A549 (cell line): ENCODE measurements at regions of chr1 and their contacts with region 1.

Region 1: DNA sequence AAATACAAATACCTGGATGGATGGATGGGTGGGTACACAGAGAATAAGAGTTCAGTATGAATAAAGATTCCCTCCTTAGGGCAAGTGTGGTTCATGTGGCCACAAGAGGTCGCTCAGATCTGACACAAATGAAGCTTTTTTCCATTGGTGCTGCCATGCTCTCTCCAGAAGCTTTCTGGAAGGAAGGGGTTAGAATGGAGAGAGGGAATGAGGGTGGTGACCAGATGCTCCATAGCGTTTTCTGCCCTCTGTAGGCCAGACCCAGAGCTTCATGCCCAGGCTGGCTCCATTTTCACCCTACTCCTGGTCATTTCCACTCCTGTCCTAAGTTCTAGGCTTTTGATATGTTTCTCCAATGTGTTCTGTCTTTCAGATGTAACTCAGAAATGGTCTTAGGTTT is 3.3 kb upstream of the FCRL6 start:
- DNase-seq: peak; percentile 86 to 91
- ATAC-seq: peak; percentile 91 to 99
- H3K4me3 ChIP-seq: no peak overlapping the region
- H3K27ac ChIP-seq: no peak overlapping the region
- H3K4me1 ChIP-seq: no peaks in the 10 kb centered on the region
- CTCF ChIP-seq: peak; percentile 88
- EP300 ChIP-seq: no peak
- POLR2A ChIP-seq: no peak
- RAD21 ChIP-seq: peak; percentile 87

Region 2: DNA sequence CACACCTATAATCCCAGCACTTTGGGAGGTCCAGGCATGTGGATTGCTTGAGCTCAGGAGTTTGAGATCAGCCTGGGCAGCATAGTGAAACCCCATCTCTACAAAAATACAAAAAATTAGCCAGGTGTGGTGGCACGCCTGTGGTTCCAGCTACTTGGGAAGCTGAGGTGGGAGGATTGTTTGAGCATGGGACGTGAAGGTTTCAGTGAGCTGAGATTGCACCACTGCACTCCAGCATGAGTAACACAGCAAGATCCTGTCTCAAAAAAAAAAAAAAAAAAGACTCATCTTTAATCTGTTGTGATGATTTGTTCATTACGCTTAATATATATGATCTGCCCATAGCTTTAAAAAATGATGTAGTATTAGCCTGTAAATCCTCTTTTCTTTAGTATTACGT is 315.4 kb before region 1 on chr1:
- CTCF ChIA-PET with region 1: no interaction called
- POLR2A ChIA-PET with region 1: no interaction called
- DNase-seq: no peak
- ATAC-seq: no peak
- H3K4me3 ChIP-seq: no peak overlapping the region
- H3K27ac ChIP-seq: no peak overlapping the region
- H3K4me1 ChIP-seq: no peaks in the 10 kb centered on the region
- CTCF ChIP-seq: no peak
- EP300 ChIP-seq: no peak
- POLR2A ChIP-seq: no peak
- RAD21 ChIP-seq: no peak

Region 3: GRCh38 chr1:159780583-159781582 is 18.0 kb before region 1 on chr1 and contains the start of gene DUSP23:
- CTCF ChIA-PET with region 1: interaction called, 36 read pairs
- POLR2A ChIA-PET with region 1: no interaction called
- DNase-seq: peak; percentile 97 to 98
- ATAC-seq: peak; percentile 96 to 99
- H3K4me3 ChIP-seq: peak within 1 kb of the TSS; percentile 64
- H3K27ac ChIP-seq: peak within 1 kb of the TSS; percentile 80 to 89
- H3K4me1 ChIP-seq: peaks cover 9% of the 10 kb centered on the region; the same call in 2 of the 3 replicates
- CTCF ChIP-seq: peak; percentile 89
- EP300 ChIP-seq: no peak
- POLR2A ChIP-seq: peak; percentile 51; the same call in 1 of the 2 replicates
- RAD21 ChIP-seq: peak; percentile 83 to 90
- polyA plus RNA-seq, gene DUSP23: 32.3 and 35.2 TPM in 2 replicates

Region 4: DNA sequence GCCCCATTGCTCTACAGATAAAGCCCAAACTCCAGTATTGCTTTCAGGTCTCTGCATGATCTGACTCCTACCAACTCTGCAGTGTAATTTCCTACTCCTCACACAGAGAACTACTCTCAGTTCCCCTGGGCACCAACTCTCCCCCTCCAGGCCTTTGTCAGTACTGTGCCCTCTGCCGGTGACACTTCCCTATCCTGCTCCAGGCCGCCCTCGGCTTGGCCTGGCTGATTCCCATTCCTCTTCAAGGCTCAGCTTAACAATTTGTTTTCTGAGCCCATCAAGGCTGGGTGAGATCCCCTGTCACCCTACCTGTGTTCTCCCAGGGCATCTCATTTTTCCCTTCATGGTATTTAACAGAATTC is 30.4 kb after region 1 on chr1:
- CTCF ChIA-PET with region 1: interaction called, 55 read pairs
- POLR2A ChIA-PET with region 1: no interaction called
- DNase-seq: peak; percentile 22 to 43
- ATAC-seq: peak; percentile 85 to 95
- H3K4me3 ChIP-seq: no peak overlapping the region
- H3K27ac ChIP-seq: no peak overlapping the region
- H3K4me1 ChIP-seq: no peaks in the 10 kb centered on the region
- CTCF ChIP-seq: no peak; the same call in 2 of the 3 replicates
- EP300 ChIP-seq: no peak
- POLR2A ChIP-seq: no peak
- RAD21 ChIP-seq: peak in 1 of 2 experiments; percentile 17; a peak in 1 of 5 replicates

Region 5: GRCh38 chr1:159854693-159855192 is 55.9 kb after region 1 on chr1:
- CTCF ChIA-PET with region 1: interaction called, 13 read pairs
- POLR2A ChIA-PET with region 1: no interaction called
- DNase-seq: peak; percentile 60 to 81
- ATAC-seq: peak; percentile 90 to 93
- H3K4me3 ChIP-seq: peak overlapping the region; percentile 59
- H3K27ac ChIP-seq: peak overlapping the region; percentile 86 to 93
- H3K4me1 ChIP-seq: peaks cover 18% of the 10 kb centered on the region
- CTCF ChIP-seq: no peak
- EP300 ChIP-seq: no peak
- POLR2A ChIP-seq: peak; percentile 47
- RAD21 ChIP-seq: peak in 1 of 2 experiments; percentile 23; a peak in 2 of 5 replicates

Region 6: DNA sequence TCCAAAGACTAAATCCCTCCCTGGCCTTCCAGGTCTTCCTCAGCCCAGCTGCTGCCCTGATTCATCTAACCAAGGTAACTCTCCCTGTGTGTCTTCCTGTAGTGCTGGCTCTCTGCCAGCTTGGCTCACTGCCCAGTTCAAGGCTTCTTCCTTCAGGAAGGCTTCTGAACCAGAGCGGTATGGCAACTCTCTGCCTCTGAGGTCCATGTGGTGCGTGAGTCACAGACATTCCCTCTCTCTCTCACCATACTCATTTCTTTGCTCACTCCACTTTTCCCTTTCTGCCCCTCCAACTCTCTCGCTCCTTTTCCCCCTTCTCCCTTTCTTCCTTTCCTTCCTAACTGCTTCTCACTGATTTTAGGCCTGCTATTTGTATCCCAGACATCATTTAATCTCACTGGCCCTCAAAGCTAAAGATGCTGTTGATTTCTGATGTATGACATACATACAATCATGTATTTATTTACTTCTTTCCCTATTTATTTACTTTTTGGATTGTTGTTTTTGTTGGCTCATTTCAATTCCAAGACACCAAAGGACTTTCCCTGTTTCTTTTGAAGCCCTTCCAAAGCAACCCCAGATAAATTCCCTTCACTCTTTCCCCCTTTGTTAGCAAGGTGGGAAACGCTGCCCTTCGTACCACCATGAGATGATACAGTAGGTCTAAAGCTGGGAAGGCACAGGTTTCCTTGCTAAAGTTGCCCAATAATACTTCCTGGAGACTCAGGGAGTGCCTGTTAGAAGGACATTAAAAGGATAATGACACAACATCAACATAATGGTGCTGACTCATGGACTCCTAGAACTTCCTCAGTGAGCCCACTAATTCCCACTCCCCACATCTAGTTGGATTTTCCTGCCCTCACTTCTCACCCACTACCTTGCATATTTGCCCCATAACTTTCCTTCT is 83.3 kb after region 1 on chr1:
- CTCF ChIA-PET with region 1: interaction called, 565 read pairs
- POLR2A ChIA-PET with region 1: no interaction called
- DNase-seq: peak; percentile 90 to 95
- ATAC-seq: peak; percentile 94
- H3K4me3 ChIP-seq: no peak overlapping the region
- H3K27ac ChIP-seq: peak overlapping the region; percentile 53 to 70
- H3K4me1 ChIP-seq: peaks cover 39% of the 10 kb centered on the region
- CTCF ChIP-seq: no peak
- EP300 ChIP-seq: 0 out of 5 replicates have a peak, but pooled peaks of 1 of the 2 experiments have one; percentile 17
- POLR2A ChIP-seq: no peak
- RAD21 ChIP-seq: 0 out of 5 replicates have a peak, but pooled peaks of 1 of the 2 experiments have one; percentile 2

Region 7: GRCh38 chr1:159936273-159936904 is 137.5 kb after region 1 on chr1:
- CTCF ChIA-PET with region 1: interaction called, 15 read pairs
- POLR2A ChIA-PET with region 1: no interaction called
- DNase-seq: peak; percentile 59 to 84
- ATAC-seq: peak; percentile 76 to 91
- H3K4me3 ChIP-seq: no peak overlapping the region
- H3K27ac ChIP-seq: peak overlapping the region in 1 of 2 experiments; percentile 43; a peak in 3 of 6 replicates
- H3K4me1 ChIP-seq: peaks cover 20% of the 10 kb centered on the region
- CTCF ChIP-seq: peak; percentile 89
- EP300 ChIP-seq: no peak
- POLR2A ChIP-seq: no peak
- RAD21 ChIP-seq: peak; percentile 90 to 93

Region 8: GRCh38 chr1:160058087-160058486 is 259.2 kb after region 1 on chr1:
- CTCF ChIA-PET with region 1: no interaction called
- POLR2A ChIA-PET with region 1: no interaction called
- DNase-seq: no peak
- ATAC-seq: peak in 1 of 2 experiments; percentile 65; a peak in 3 of 6 replicates
- H3K4me3 ChIP-seq: no peak overlapping the region
- H3K27ac ChIP-seq: no peak overlapping the region
- H3K4me1 ChIP-seq: peaks cover 7% of the 10 kb centered on the region; the same call in 2 of the 3 replicates
- CTCF ChIP-seq: peak; percentile 23; the same call in 1 of the 3 replicates
- EP300 ChIP-seq: no peak
- POLR2A ChIP-seq: no peak
- RAD21 ChIP-seq: no peak; a peak in 1 of 5 replicates

Region 9: GRCh38 chr1:160219062-160219929 is 420.4 kb after region 1 on chr1:
- CTCF ChIA-PET with region 1: no interaction called
- POLR2A ChIA-PET with region 1: no interaction called
- DNase-seq: peak; percentile 55 to 70
- ATAC-seq: peak; percentile 87 to 88
- H3K4me3 ChIP-seq: no peak overlapping the region
- H3K27ac ChIP-seq: 0 out of 6 replicates have a peak overlapping the region, but pooled peaks of 1 of the 2 experiments have one; percentile 5
- H3K4me1 ChIP-seq: peaks cover 19% of the 10 kb centered on the region; the same call in 2 of the 3 replicates
- CTCF ChIP-seq: peak; percentile 61
- EP300 ChIP-seq: no peak
- POLR2A ChIP-seq: no peak
- RAD21 ChIP-seq: peak; percentile 72 to 74